ENCODE measurements at regions of chr2 and their contacts with region 1.

Region 1: DNA sequence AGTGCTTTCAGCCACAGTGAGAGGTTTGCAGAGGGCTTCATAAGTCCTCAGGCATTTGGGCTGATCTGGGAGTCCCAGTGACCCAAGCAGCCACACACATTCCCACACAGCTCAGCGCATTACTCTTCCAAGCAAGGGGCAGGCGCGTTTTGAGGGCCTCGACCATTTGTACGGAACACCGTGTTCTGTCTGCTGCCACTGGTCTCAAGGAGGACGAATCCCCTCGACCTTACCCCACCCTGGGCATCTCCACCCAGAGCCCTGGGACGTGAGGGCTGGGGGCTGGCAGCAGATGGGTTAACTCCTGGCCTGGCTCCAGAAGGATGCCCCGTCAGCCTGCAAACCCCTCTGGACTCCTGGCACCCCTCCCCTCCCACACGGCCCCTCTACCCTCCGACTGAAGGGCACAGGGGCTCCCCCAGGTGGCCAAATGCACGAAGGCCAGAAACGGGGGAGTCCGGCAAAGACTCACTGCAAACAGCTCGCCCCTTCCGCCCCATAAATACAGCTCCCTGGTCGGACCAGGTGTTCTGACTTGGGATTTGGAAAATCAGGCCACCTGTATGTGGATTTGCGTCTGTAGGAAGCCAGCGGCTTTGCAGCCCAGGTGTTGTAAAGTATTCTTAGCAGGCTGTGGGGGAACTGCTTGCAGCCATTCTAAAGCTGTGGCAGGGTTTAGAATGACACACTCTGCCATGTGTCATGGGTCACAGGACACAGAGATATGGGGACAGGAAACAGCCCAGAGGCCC is 33.6 kb upstream of the PTMA start:
- DNase-seq: peak; percentile 26 to 79 (median 47)
- ATAC-seq: peak; percentile 60 to 67
- H3K4me3 Mint-ChIP-seq: peak overlapping the region in 1 of 10 donors; percentile 20
- H3K27ac Mint-ChIP-seq: peak overlapping the region in 2 of 10 donors; percentile 46 to 61
- H3K4me1 Mint-ChIP-seq: peaks cover 3 to 44% (median 8%) of the 10 kb centered on the region in 4 donors
- H3K27me3 Mint-ChIP-seq: peaks cover 0 to 2% (median under 1%) of the 10 kb centered on the region in 5 donors

Region 2: GRCh38 chr2:231612179-231613053 is 62.3 kb before region 1 on chr2:
- POLR2A ChIA-PET with region 1: interaction called, 34 read pairs
- DNase-seq: peak; percentile 76 to 94 (median 85)
- ATAC-seq: peak; percentile 59 to 76
- H3K4me3 Mint-ChIP-seq: peak overlapping the region; percentile 57 to 91 (median 88)
- H3K27ac Mint-ChIP-seq: peak overlapping the region; percentile 5 to 95 (median 80)
- H3K4me1 Mint-ChIP-seq: peaks cover 10 to 38% (median 30%) of the 10 kb centered on the region in 4 donors
- H3K27me3 Mint-ChIP-seq: no peaks in the 10 kb centered on the region

Region 3: DNA sequence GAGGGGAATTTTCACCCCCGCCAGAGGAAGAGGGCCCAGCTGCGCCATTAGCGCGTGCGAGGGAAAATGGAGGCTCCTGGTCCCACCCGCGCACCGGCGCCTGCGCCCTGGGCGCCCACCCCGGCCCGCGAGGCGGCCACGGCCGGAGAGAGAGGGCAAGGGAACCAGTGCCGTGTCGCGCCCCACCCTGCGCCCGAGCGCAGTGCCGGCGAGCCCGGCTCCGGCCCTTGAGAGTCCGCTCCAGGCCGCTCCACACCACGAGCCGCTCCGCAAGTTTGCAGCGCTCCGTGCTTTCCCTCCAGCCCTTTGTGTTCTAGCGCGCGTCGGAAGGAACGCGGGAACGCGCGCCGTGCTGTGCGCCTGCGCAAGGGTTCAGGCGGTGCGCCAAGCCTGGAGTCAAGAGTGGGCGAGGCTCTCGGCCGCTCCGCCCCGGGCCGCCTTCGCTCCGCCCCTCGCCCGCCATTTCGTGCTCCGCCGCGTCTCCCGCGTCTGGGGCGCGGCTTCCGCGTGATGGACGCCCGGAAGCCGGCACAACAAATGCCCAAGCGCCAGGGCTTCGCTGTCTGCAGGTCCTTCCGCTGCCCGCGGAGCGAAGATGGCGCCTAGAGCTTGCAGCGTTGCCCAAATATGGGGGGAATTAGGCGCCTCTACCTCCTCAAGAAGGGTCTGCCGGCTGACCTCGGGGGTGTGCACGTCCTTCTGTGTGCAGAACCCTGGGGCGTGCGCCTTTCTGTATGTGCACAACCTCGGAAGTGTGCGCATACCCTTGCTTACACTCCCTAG is 12.5 kb before region 1 on chr2:
- POLR2A ChIA-PET with region 1: interaction called, 33 read pairs
- DNase-seq: peak; percentile 92 to 99 (median 98)
- ATAC-seq: peak; percentile 88 to 91
- H3K4me3 Mint-ChIP-seq: peak overlapping the region; percentile 71 to 87 (median 82)
- H3K27ac Mint-ChIP-seq: peak overlapping the region; percentile 82 to 99 (median 96)
- H3K4me1 Mint-ChIP-seq: peaks cover 6 to 37% (median 17%) of the 10 kb centered on the region in 4 donors
- H3K27me3 Mint-ChIP-seq: no peaks in the 10 kb centered on the region

Region 4: DNA sequence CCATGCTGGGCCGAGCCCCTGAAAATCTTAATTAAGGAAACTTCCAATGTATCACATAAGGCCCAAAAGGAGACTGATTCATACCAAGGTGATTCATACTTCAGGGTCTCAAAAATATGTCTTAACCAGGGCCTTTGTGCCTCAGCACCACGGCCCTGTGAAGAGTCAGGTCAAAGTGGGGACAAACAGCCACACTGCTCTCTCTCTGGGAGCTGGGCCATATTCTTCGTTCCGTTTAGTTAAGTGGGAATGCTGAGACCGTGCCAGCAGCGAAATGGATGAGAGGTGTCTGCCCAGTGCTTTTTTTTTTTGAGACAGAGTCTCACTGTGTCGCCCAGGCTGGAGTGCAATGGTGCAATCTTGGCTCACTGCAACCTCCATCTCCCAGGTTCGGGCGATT is 24.2 kb after region 1 on chr2:
- POLR2A ChIA-PET with region 1: no interaction called
- DNase-seq: no peak
- ATAC-seq: no peak
- H3K4me3 Mint-ChIP-seq: no peak overlapping the region
- H3K27ac Mint-ChIP-seq: no peak overlapping the region
- H3K4me1 Mint-ChIP-seq: peaks cover 0 to 3% (median 1%) of the 10 kb centered on the region in 4 donors
- H3K27me3 Mint-ChIP-seq: no peaks in the 10 kb centered on the region

Measured in naive thymus-derived CD8-positive, alpha-beta T cell (primary cell).